Activated T-helper 1 cell treated with anti-CD3 and anti-CD28 coated beads, Interleukin-12 subunit alpha, Interleukin-12 subunit beta, Interleukin-2, Interleukin-4 antibody, amounts not matched to agents 30 ng/mL and 10 ng/mL and 1 ng/mL, durations not matched to agents 14 hours and 24 hours and 36 hours (primary cell): ENCODE measurements at regions of chr7 and their contacts with region 1.

Region 1: DNA sequence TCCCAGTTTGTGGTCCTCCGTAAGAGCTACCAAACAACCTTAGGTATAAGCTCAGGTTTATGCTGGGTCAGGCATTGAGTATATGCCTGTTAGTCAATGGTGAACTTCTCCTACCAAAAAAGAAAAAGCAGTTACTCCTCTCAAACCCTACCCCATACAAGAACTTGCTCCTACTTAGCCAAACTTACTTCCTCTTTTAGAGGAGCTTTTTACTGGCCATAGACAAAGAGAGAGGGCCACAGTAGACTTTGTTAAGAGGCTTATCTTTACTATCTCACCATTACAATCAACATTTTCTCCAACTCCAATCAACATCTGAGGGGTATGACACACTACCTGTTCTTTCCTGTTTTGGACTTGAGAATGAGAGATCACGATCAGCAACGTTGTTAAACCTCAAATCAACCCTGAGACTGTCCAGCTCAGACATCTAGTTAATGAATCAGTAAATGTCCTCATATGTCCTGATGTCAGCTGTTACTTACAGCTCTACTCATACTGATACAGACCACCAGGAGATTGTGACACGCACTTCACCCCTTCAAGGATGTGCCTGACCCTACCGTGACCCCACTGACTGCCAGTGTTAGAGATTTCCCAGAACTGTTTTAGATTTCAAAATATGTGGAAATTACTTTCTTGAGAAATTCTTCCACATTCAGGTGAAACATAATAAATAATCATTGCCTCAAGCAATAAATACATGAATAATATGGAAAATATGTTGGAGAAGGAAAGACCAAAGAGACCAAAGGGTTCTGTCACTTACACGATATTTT is 18.4 kb upstream of the CCDC71L start:
- DNase-seq: no peak
- H3K4me3 Mint-ChIP-seq: no peak overlapping the region
- H3K27ac Mint-ChIP-seq: no peak overlapping the region
- H3K4me1 Mint-ChIP-seq: no peaks in the 10 kb centered on the region
- H3K27me3 Mint-ChIP-seq: no peaks in the 10 kb centered on the region

Region 2: DNA sequence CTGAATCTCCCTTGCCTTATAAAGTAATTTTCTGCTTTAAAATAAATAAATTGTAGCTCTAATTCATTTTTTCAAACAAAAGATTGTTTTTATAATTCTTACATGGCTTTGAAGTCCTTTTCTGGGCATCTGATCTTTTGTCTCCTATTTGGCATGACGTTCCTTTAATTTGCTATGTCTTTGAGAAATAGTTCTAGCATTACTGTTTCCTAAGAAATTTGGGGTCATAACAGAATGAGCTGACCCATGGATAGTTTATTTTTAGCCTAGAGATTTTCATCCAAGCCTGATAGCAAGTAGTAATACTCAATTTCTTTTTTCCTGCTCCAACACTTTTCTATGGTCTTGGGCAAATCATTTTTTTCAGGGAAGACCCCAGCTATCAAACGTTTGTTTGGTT is 49.8 kb before region 1 on chr7:
- intact Hi-C with region 1: loop called (anchors 1 kb)
- DNase-seq: no peak
- H3K4me3 Mint-ChIP-seq: no peak overlapping the region
- H3K27ac Mint-ChIP-seq: no peak overlapping the region
- H3K4me1 Mint-ChIP-seq: no peaks in the 10 kb centered on the region
- H3K27me3 Mint-ChIP-seq: peaks cover 5% of the 10 kb centered on the region

Region 3: DNA sequence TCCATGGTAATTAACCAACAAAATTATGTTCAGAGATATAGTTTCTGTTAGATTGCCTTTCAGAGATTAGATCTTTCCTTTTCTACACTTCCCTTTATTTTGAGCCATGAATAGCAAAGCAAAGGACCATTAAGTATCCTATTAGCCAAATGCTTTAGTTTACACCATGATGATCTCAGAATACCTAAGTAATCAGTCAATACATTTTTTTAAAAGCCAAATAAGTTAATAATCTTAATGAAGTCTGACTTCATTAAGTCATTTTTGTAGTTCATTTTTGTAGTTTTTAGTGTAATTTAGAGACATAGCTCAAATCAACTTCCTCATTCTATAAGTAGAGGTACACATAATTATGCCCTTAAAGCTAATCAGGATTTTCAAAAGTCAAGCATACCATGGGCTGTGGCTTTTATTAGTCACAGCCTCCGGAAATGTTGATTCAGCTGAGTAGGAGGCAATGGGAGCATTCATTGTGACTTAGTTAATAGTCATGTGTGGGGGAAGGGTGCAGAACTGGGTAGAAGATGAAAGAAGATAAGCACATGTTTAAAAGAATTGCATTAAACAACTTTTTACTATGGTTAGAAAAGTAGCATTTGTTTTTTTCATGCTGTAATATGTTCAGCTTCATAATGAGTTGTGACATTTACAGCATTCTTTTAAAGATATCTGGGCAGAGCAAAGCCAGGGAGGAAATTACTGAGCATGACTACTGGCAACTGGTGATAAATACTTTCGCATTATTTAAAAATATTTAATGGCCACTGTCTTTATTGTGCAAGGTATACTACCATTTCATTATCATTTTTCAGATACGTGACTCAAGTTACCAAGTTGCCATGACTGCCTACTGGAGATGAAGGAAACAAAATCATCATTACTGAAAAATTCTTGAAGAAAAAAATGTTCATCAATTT is 38.9 kb after region 1 on chr7:
- intact Hi-C with region 1: no loop called
- DNase-seq: peak; percentile 37
- H3K4me3 Mint-ChIP-seq: no peak overlapping the region
- H3K27ac Mint-ChIP-seq: no peak overlapping the region
- H3K4me1 Mint-ChIP-seq: peaks cover 11% of the 10 kb centered on the region
- H3K27me3 Mint-ChIP-seq: no peaks in the 10 kb centered on the region

Region 4: GRCh38 chr7:108415821-108416536 is 1736.6 kb after region 1 on chr7:
- intact Hi-C with region 1: no loop called
- DNase-seq: no peak
- H3K4me3 Mint-ChIP-seq: no peak overlapping the region
- H3K27ac Mint-ChIP-seq: peak overlapping the region; percentile 2
- H3K4me1 Mint-ChIP-seq: peaks cover 13% of the 10 kb centered on the region
- H3K27me3 Mint-ChIP-seq: peaks cover 4% of the 10 kb centered on the region